ENCODE measurements at regions of chr13 and their contacts with region 1.

Region 1: DNA sequence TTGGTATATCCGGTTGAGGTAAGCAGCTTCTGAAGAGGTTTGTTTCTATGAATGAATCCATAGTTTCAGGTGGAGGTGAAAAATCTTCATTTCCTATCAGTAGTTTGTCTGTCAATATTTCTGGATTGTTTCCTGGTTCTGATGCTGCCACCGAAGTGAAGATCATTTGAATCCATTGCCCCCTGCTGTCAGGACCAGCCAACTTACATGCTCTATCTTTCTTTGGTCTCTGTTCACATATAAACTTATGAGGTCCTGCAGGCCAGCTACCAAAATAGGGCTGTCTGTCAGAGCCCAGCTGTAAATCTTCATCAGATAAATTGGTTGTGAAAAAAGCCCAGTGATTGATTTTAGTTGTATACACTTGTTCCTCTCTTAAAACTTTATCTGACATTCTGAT is 15.2 kb upstream of the N4BP2L1 start:
- DNase-seq: peak in 6 of 9 experiments; percentile 14 to 77 (median 47)
- ATAC-seq: peak; percentile 75
- H3K4me3 ChIP-seq: no peak overlapping the region
- H3K4me3 Mint-ChIP-seq: no peak overlapping the region
- H3K27ac ChIP-seq: no peak overlapping the region
- H3K27ac Mint-ChIP-seq: no peak overlapping the region
- H3K4me1 ChIP-seq: no peaks in the 10 kb centered on the region
- H3K4me1 Mint-ChIP-seq: peaks cover 3% of the 10 kb centered on the region
- H3K27me3 ChIP-seq: no peaks in the 10 kb centered on the region
- H3K27me3 Mint-ChIP-seq: no peaks in the 10 kb centered on the region
- CTCF ChIP-seq: peak; percentile 65

Region 2: GRCh38 chr13:32031025-32031814 is 411.9 kb before region 1 on chr13 and contains the start of gene FRY:
- CTCF ChIA-PET with region 1: no interaction called
- POLR2A ChIA-PET with region 1: no interaction called
- intact Hi-C with region 1: loop called in 1 of 2 experiments (anchors 10 kb)
- DNase-seq: peak; percentile 3 to 67 (median 40)
- ATAC-seq: peak; percentile 71
- H3K4me3 ChIP-seq: peak within 1 kb of the TSS; percentile 69 to 79
- H3K4me3 Mint-ChIP-seq: peak within 1 kb of the TSS; percentile 79
- H3K27ac ChIP-seq: peak within 1 kb of the TSS in 1 of 2 experiments; percentile 26
- H3K27ac Mint-ChIP-seq: peak within 1 kb of the TSS; percentile 8
- H3K4me1 ChIP-seq: peaks cover 3% of the 10 kb centered on the region
- H3K4me1 Mint-ChIP-seq: peaks cover 11% of the 10 kb centered on the region
- H3K27me3 ChIP-seq: peaks cover 0 to 2% of the 10 kb centered on the region in 2 experiments
- H3K27me3 Mint-ChIP-seq: peaks cover 25% of the 10 kb centered on the region
- CTCF ChIP-seq: no peak
- total RNA-seq, gene FRY: 1.7 to 4.2 TPM

Region 3: DNA sequence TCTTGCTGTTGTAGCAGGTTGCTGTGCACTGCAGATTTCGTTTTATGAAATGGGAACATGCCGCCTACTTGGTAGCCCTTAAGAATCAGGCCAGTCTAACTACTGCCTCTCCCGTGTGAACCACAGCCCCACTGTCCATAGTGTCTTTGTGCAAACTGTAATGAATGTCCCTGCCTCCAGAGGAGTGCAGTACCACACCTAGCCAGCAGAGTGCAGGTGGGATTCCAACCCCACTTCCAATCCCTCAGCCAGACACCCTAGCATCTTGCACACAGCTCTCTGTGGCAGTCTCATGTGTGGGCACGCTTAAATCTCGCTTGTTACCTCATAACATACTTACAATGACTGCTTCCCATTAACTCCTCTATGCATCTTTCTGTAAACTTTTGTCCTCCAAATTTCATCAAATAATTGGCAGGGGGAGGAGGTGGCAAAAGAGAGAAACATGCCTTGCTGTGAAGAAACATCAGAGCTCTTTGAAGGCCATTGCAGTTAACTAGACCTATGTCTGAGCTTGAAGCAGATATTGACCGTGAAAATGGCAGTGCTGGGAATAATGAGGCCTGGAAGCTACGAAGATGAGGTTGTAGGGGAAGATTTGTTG is 175.2 kb before region 1 on chr13:
- CTCF ChIA-PET with region 1: interaction called, 4 read pairs
- POLR2A ChIA-PET with region 1: no interaction called
- intact Hi-C with region 1: loop called (anchors 2 to 5 kb)
- DNase-seq: peak; percentile 21 to 66 (median 52)
- ATAC-seq: peak; percentile 97
- H3K4me3 ChIP-seq: no peak overlapping the region
- H3K4me3 Mint-ChIP-seq: no peak overlapping the region
- H3K27ac ChIP-seq: no peak overlapping the region
- H3K27ac Mint-ChIP-seq: no peak overlapping the region
- H3K4me1 ChIP-seq: no peaks in the 10 kb centered on the region
- H3K4me1 Mint-ChIP-seq: no peaks in the 10 kb centered on the region
- H3K27me3 ChIP-seq: no peaks in the 10 kb centered on the region
- H3K27me3 Mint-ChIP-seq: no peaks in the 10 kb centered on the region
- CTCF ChIP-seq: peak; percentile 82

Region 4: DNA sequence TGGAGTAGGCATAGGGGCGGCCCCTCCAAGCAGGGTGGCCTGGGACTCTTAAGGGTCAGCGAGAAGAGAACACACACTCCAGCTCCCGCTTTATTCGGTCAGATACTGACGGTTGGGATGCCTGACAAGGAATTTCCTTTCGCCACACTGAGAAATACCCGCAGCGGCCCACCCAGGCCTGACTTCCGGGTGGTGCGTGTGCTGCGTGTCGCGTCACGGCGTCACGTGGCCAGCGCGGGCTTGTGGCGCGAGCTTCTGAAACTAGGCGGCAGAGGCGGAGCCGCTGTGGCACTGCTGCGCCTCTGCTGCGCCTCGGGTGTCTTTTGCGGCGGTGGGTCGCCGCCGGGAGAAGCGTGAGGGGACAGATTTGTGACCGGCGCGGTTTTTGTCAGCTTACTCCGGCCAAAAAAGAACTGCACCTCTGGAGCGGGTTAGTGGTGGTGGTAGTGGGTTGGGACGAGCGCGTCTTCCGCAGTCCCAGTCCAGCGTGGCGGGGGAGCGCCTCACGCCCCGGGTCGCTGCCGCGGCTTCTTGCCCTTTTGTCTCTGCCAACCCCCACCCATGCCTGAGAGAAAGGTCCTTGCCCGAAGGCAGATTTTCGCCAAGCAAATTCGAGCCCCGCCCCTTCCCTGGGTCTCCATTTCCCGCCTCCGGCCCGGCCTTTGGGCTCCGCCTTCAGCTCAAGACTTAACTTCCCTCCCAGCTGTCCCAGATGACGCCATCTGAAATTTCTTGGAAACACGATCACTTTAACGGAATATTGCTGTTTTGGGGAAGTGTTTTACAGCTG is 127.7 kb before region 1 on chr13 and contains the starts of genes BRCA2 and ZAR1L:
- CTCF ChIA-PET with region 1: no interaction called
- POLR2A ChIA-PET with region 1: interaction called, 3 read pairs
- intact Hi-C with region 1: loop called in 1 of 2 experiments (anchors 5 kb)
- DNase-seq: peak; percentile 73 to 95 (median 88)
- ATAC-seq: peak; percentile 90
- H3K4me3 ChIP-seq: peak within 1 kb of the TSS; percentile 80 to 81
- H3K4me3 Mint-ChIP-seq: peak within 1 kb of the TSS; percentile 93
- H3K27ac ChIP-seq: peak within 1 kb of the TSS; percentile 99
- H3K27ac Mint-ChIP-seq: peak within 1 kb of the TSS; percentile 100
- H3K4me1 ChIP-seq: peaks cover 4% of the 10 kb centered on the region
- H3K4me1 Mint-ChIP-seq: peaks cover 14% of the 10 kb centered on the region
- H3K27me3 ChIP-seq: no peaks in the 10 kb centered on the region
- H3K27me3 Mint-ChIP-seq: no peaks in the 10 kb centered on the region
- CTCF ChIP-seq: no peak
- total RNA-seq, gene BRCA2: 2.6 to 3.6 TPM
- total RNA-seq, gene ZAR1L: not detected

Region 5: GRCh38 chr13:32381539-32381938 is 61.6 kb before region 1 on chr13:
- CTCF ChIA-PET with region 1: interaction called, 21 read pairs
- POLR2A ChIA-PET with region 1: no interaction called
- intact Hi-C with region 1: loop called in 1 of 2 experiments (anchors 1 kb)
- DNase-seq: peak in 5 of 9 experiments; percentile 17 to 70 (median 30)
- ATAC-seq: peak; percentile 80
- H3K4me3 ChIP-seq: no peak overlapping the region
- H3K4me3 Mint-ChIP-seq: no peak overlapping the region
- H3K27ac ChIP-seq: no peak overlapping the region
- H3K27ac Mint-ChIP-seq: no peak overlapping the region
- H3K4me1 ChIP-seq: no peaks in the 10 kb centered on the region
- H3K4me1 Mint-ChIP-seq: no peaks in the 10 kb centered on the region
- H3K27me3 ChIP-seq: no peaks in the 10 kb centered on the region
- H3K27me3 Mint-ChIP-seq: no peaks in the 10 kb centered on the region
- CTCF ChIP-seq: peak; percentile 51

Region 6: GRCh38 chr13:32476021-32476731 is 33.1 kb after region 1 on chr13:
- CTCF ChIA-PET with region 1: no interaction called
- POLR2A ChIA-PET with region 1: no interaction called
- intact Hi-C with region 1: no loop called
- DNase-seq: no peak
- ATAC-seq: no peak
- H3K4me3 ChIP-seq: no peak overlapping the region
- H3K4me3 Mint-ChIP-seq: no peak overlapping the region
- H3K27ac ChIP-seq: no peak overlapping the region
- H3K27ac Mint-ChIP-seq: no peak overlapping the region
- H3K4me1 ChIP-seq: no peaks in the 10 kb centered on the region
- H3K4me1 Mint-ChIP-seq: no peaks in the 10 kb centered on the region
- H3K27me3 ChIP-seq: no peaks in the 10 kb centered on the region
- H3K27me3 Mint-ChIP-seq: no peaks in the 10 kb centered on the region
- CTCF ChIP-seq: no peak

Measured in CD8-positive, alpha-beta T cell (primary cell).